Naive thymus-derived CD4-positive, alpha-beta T cell (primary cell): ENCODE measurements at regions of chr1 and their contacts with region 1.

Region 1: GRCh38 chr1:227762233-227762911 is 27.1 kb downstream of the SNAP47 start:
- DNase-seq: peak; percentile 72 to 88 (median 85)
- ATAC-seq: peak; percentile 86
- H3K4me3 ChIP-seq: peak overlapping the region; percentile 39
- H3K4me3 Mint-ChIP-seq: peak overlapping the region; percentile 39 to 80 (median 72)
- H3K27ac ChIP-seq: peak overlapping the region; percentile 57
- H3K27ac Mint-ChIP-seq: peak overlapping the region; percentile 69 to 95 (median 86)
- H3K4me1 ChIP-seq: peaks cover 56 to 61% of the 10 kb centered on the region in 2 donors
- H3K4me1 Mint-ChIP-seq: peaks cover 36 to 89% (median 67%) of the 10 kb centered on the region in 7 donors
- H3K27me3 ChIP-seq: no peaks in the 10 kb centered on the region
- H3K27me3 Mint-ChIP-seq: no peaks in the 10 kb centered on the region

Region 2: GRCh38 chr1:227482023-227482299 is 280.4 kb before region 1 on chr1:
- CTCF ChIA-PET with region 1: interaction called, 3 read pairs
- POLR2A ChIA-PET with region 1: no interaction called
- intact Hi-C with region 1: loop called in 1 of 2 experiments (anchors 5 kb)
- DNase-seq: no peak
- ATAC-seq: no peak
- H3K4me3 ChIP-seq: no peak overlapping the region
- H3K4me3 Mint-ChIP-seq: no peak overlapping the region
- H3K27ac ChIP-seq: no peak overlapping the region
- H3K27ac Mint-ChIP-seq: no peak overlapping the region
- H3K4me1 ChIP-seq: no peaks in the 10 kb centered on the region
- H3K4me1 Mint-ChIP-seq: no peaks in the 10 kb centered on the region
- H3K27me3 ChIP-seq: no peaks in the 10 kb centered on the region
- H3K27me3 Mint-ChIP-seq: peaks cover 17 to 47% (median 27%) of the 10 kb centered on the region in 5 donors

Region 3: GRCh38 chr1:227728059-227728891 is 34.1 kb before region 1 on chr1:
- CTCF ChIA-PET with region 1: no interaction called
- POLR2A ChIA-PET with region 1: interaction called, 4 read pairs
- intact Hi-C with region 1: loop called in 1 of 2 experiments (anchors 1 kb)
- DNase-seq: peak in 7 of 9 donors; percentile 23 to 63 (median 39)
- ATAC-seq: peak; percentile 69
- H3K4me3 ChIP-seq: peak overlapping the region; percentile 59
- H3K4me3 Mint-ChIP-seq: peak overlapping the region; percentile 78 to 89 (median 87)
- H3K27ac ChIP-seq: peak overlapping the region; percentile 69
- H3K27ac Mint-ChIP-seq: peak overlapping the region; percentile 43 to 90 (median 74)
- H3K4me1 ChIP-seq: peaks cover 0 to 10% of the 10 kb centered on the region in 2 donors
- H3K4me1 Mint-ChIP-seq: peaks cover 6 to 29% (median 20%) of the 10 kb centered on the region in 7 donors
- H3K27me3 ChIP-seq: no peaks in the 10 kb centered on the region
- H3K27me3 Mint-ChIP-seq: peaks cover 0 to 11% (median 8%) of the 10 kb centered on the region in 5 donors

Region 4: DNA sequence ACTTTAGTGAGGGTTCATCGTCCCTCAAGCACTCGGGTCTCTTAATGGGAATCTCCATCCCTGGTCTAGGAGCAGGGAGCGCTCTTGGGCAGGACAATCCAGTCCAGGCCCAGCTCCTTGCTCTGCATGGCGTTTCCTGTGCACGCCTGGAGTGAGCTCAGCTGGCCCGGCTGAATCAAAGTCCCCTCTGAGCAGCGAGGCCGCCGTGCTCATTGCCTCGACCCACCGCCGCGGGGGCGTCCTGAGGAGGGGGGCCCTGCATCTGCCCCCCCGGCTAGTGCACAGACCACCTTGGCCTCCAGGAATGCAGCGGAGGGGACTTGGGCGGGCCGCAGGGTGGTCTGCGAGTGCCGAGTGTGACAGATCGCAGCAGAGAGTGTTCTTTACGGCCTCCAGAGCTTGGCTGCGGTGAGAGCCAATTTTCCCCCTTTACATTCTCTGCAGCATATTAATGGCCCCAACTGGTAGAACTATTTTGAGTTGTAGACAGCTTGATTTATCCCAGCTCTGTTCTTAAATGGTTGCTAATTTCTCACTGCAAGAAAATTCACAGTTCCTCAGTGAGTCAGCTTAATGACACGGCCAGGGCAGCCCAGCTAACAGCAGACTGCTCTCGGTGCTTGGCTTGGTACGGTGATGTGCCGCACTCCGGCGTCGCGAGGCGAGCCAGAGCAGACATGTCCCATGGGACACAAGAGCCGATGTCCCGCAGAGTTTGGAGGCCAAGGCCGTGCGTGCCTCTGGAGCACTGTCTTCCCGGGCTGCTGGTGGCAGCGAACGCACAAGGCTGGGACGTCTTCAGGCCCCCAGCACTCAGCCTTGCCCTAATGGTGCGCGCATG is 12.7 kb after region 1 on chr1:
- CTCF ChIA-PET with region 1: interaction called, 4 read pairs
- POLR2A ChIA-PET with region 1: no interaction called
- intact Hi-C with region 1: loop called in 1 of 2 experiments (anchors 1 kb)
- DNase-seq: no peak
- ATAC-seq: no peak
- H3K4me3 ChIP-seq: no peak overlapping the region
- H3K4me3 Mint-ChIP-seq: peak overlapping the region in 1 of 10 donors; percentile 41
- H3K27ac ChIP-seq: no peak overlapping the region
- H3K27ac Mint-ChIP-seq: peak overlapping the region in 3 of 9 donors; percentile 72 to 97 (median 83)
- H3K4me1 ChIP-seq: peaks cover 11 to 26% of the 10 kb centered on the region in 2 donors
- H3K4me1 Mint-ChIP-seq: peaks cover 11 to 28% (median 24%) of the 10 kb centered on the region in 7 donors
- H3K27me3 ChIP-seq: no peaks in the 10 kb centered on the region
- H3K27me3 Mint-ChIP-seq: no peaks in the 10 kb centered on the region

Region 5: GRCh38 chr1:227886993-227887696 is 124.8 kb after region 1 on chr1:
- CTCF ChIA-PET with region 1: no interaction called
- POLR2A ChIA-PET with region 1: interaction called, 3 read pairs
- intact Hi-C with region 1: loop called (anchors 5 to 10 kb)
- DNase-seq: peak in 8 of 9 donors; percentile 20 to 42 (median 35)
- ATAC-seq: peak; percentile 36
- H3K4me3 ChIP-seq: peak overlapping the region; percentile 43
- H3K4me3 Mint-ChIP-seq: peak overlapping the region; percentile 17 to 84 (median 74)
- H3K27ac ChIP-seq: peak overlapping the region; percentile 75
- H3K27ac Mint-ChIP-seq: peak overlapping the region in 8 of 9 donors; percentile 76 to 94 (median 92)
- H3K4me1 ChIP-seq: peaks cover 30 to 47% of the 10 kb centered on the region in 2 donors
- H3K4me1 Mint-ChIP-seq: peaks cover 9 to 60% (median 27%) of the 10 kb centered on the region in 7 donors
- H3K27me3 ChIP-seq: no peaks in the 10 kb centered on the region
- H3K27me3 Mint-ChIP-seq: peaks cover 0 to 4% (median 0%) of the 10 kb centered on the region in 5 donors

Region 6: GRCh38 chr1:227954163-227954850 is 191.9 kb after region 1 on chr1:
- CTCF ChIA-PET with region 1: interaction called, 38 read pairs
- POLR2A ChIA-PET with region 1: no interaction called
- intact Hi-C with region 1: loop called (anchors 2 kb)
- DNase-seq: no peak
- ATAC-seq: no peak
- H3K4me3 ChIP-seq: no peak overlapping the region
- H3K4me3 Mint-ChIP-seq: no peak overlapping the region
- H3K27ac ChIP-seq: no peak overlapping the region
- H3K27ac Mint-ChIP-seq: peak overlapping the region in 1 of 9 donors; percentile 48
- H3K4me1 ChIP-seq: peaks cover 0 to 4% of the 10 kb centered on the region in 2 donors
- H3K4me1 Mint-ChIP-seq: peaks cover 0 to 6% (median 0%) of the 10 kb centered on the region in 7 donors
- H3K27me3 ChIP-seq: no peaks in the 10 kb centered on the region
- H3K27me3 Mint-ChIP-seq: peaks cover 31 to 49% (median 36%) of the 10 kb centered on the region in 5 donors

Region 7: DNA sequence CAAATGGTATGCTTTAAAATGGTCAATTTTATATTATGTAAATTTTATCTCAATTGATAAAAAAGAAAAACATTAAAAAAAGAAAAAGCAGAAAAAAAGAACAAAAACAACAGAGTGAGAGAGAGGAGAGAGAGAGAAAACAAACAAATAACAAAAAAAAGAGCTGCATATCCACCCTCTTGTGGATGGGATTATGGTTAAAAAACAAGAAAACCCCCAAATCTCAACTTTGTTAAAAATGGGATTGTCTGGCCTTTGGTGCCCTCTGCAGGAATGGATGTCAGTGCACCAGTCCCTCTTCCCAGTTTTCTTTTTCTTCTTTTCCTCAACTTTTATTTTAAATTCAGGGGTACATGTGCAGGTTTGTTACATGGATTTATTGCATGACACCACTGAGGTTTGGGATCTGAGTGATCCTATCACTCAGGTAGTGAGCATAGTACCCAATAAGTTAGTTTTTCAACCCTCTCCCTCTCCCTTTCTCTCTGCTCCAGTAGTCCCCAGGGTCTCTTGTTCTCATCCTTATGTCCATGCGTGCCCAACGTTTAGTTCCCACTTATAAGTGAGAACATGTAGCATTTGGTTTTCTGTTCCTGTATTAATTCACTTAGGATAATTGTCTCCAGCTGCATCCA is 752.9 kb after region 1 on chr1:
- CTCF ChIA-PET with region 1: no interaction called
- POLR2A ChIA-PET with region 1: no interaction called
- intact Hi-C with region 1: loop called in 1 of 2 experiments (anchors 1 kb)
- DNase-seq: peak in 7 of 9 donors; percentile 14 to 57 (median 43)
- ATAC-seq: peak; percentile 67
- H3K4me3 ChIP-seq: no peak overlapping the region
- H3K4me3 Mint-ChIP-seq: no peak overlapping the region
- H3K27ac ChIP-seq: no peak overlapping the region
- H3K27ac Mint-ChIP-seq: no peak overlapping the region
- H3K4me1 ChIP-seq: peaks cover 0 to 6% of the 10 kb centered on the region in 2 donors
- H3K4me1 Mint-ChIP-seq: peaks cover 0 to 8% (median 6%) of the 10 kb centered on the region in 7 donors
- H3K27me3 ChIP-seq: no peaks in the 10 kb centered on the region
- H3K27me3 Mint-ChIP-seq: peaks cover 19 to 56% (median 42%) of the 10 kb centered on the region in 5 donors